ENCODE measurements at regions of chr9 and their contacts with region 1.

Region 1: GRCh38 chr9:98998441-98999151 is 54.9 kb downstream of the COL15A1 start:
- H3K4me3 Mint-ChIP-seq: no peak overlapping the region
- H3K27ac Mint-ChIP-seq: peak overlapping the region; percentile 29
- H3K4me1 Mint-ChIP-seq: peaks cover 34% of the 10 kb centered on the region
- H3K27me3 Mint-ChIP-seq: peaks cover 48% of the 10 kb centered on the region

Region 2: GRCh38 chr9:98848450-98849149 is 150.0 kb before region 1 on chr9:
- intact Hi-C with region 1: loop called (anchors 1 kb)
- H3K4me3 Mint-ChIP-seq: no peak overlapping the region
- H3K27ac Mint-ChIP-seq: no peak overlapping the region
- H3K4me1 Mint-ChIP-seq: peaks cover 26% of the 10 kb centered on the region
- H3K27me3 Mint-ChIP-seq: peaks cover 2% of the 10 kb centered on the region

Region 3: DNA sequence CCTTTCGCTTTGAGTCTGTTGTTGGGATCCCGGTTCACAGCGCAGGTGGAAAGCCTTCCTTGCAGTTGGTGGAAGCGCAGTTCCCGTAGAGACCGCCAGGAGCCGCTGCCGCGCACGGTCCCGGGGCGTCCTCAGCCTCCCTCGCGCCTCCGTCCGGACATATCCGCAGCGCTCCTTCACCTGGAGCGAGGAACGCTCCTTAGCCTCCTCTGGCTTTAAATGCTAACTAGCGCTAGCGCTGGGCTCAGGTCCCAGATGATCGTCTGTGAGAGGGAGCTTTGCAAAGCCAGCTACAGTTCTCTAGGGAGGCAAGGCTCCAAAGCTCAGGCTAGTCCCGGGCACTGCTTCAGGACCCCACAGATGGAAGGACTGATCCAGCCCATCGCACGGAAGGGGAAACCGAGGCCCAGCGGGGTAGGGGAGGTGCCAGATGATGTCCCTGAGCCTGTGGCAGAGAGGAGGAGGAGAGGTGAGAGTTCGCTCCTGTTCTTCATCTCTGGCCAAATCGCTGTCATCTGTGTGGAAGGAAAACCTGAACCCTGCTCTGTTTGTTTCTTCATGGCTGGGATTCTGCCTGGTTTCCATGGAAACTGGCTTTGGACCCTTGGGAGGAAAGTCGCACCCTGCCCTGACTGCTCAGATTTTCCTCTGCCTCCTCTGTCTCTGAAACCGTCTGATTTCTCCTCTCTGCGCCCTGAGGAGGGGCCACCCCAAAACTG is 23.4 kb before region 1 on chr9:
- intact Hi-C with region 1: loop called (anchors 1 kb)
- H3K4me3 Mint-ChIP-seq: no peak overlapping the region
- H3K27ac Mint-ChIP-seq: no peak overlapping the region
- H3K4me1 Mint-ChIP-seq: no peaks in the 10 kb centered on the region
- H3K27me3 Mint-ChIP-seq: peaks cover 53% of the 10 kb centered on the region

Region 4: GRCh38 chr9:99057665-99058625 is 59.3 kb after region 1 on chr9:
- intact Hi-C with region 1: loop called (anchors 2 kb)
- H3K4me3 Mint-ChIP-seq: peak overlapping the region; percentile 55
- H3K27ac Mint-ChIP-seq: peak overlapping the region; percentile 93
- H3K4me1 Mint-ChIP-seq: peaks cover 67% of the 10 kb centered on the region
- H3K27me3 Mint-ChIP-seq: peaks cover 22% of the 10 kb centered on the region

Region 5: GRCh38 chr9:99076483-99077171 is 78.0 kb after region 1 on chr9:
- intact Hi-C with region 1: no loop called
- H3K4me3 Mint-ChIP-seq: no peak overlapping the region
- H3K27ac Mint-ChIP-seq: peak overlapping the region; percentile 58
- H3K4me1 Mint-ChIP-seq: peaks cover 24% of the 10 kb centered on the region
- H3K27me3 Mint-ChIP-seq: peaks cover 11% of the 10 kb centered on the region

Region 6: GRCh38 chr9:99140685-99141314 is 142.2 kb after region 1 on chr9:
- intact Hi-C with region 1: loop called (anchors 1 kb)
- H3K4me3 Mint-ChIP-seq: no peak overlapping the region
- H3K27ac Mint-ChIP-seq: peak overlapping the region; percentile 34
- H3K4me1 Mint-ChIP-seq: peaks cover 50% of the 10 kb centered on the region
- H3K27me3 Mint-ChIP-seq: no peaks in the 10 kb centered on the region

Region 7: GRCh38 chr9:99184475-99185347 is 186.1 kb after region 1 on chr9:
- intact Hi-C with region 1: no loop called
- H3K4me3 Mint-ChIP-seq: no peak overlapping the region
- H3K27ac Mint-ChIP-seq: peak overlapping the region; percentile 25
- H3K4me1 Mint-ChIP-seq: peaks cover 79% of the 10 kb centered on the region
- H3K27me3 Mint-ChIP-seq: no peaks in the 10 kb centered on the region

Region 8: DNA sequence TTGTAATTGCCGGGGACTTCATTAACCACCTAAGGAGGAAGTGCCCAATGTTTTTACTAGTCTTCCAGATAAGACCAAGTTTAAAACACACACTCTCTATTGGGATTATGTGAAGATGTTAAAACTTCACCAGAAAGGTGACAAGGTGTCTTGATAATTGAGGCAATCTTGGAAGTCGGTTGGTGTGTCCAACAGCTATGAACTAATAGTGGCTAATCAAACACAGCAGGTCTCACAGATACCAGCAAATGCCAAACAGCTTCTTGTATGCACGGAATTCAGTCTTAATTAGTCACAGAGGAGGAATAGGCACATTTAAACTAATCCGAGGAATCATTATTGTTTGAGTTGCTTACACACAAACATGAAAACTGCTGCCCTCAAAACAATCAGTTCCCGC is 438.0 kb after region 1 on chr9:
- intact Hi-C with region 1: no loop called
- H3K4me3 Mint-ChIP-seq: no peak overlapping the region
- H3K27ac Mint-ChIP-seq: no peak overlapping the region
- H3K4me1 Mint-ChIP-seq: peaks cover 43% of the 10 kb centered on the region
- H3K27me3 Mint-ChIP-seq: no peaks in the 10 kb centered on the region

Measured in dendritic cell treated with granulocyte-macrophage colony-stimulating factor and Interleukin-4, amounts not matched to agents 40 ng/mL and 50 ng/mL, for 4 days (primary cell).